ENCODE measurements at regions of chr12 and their contacts with region 1.

Region 1: DNA sequence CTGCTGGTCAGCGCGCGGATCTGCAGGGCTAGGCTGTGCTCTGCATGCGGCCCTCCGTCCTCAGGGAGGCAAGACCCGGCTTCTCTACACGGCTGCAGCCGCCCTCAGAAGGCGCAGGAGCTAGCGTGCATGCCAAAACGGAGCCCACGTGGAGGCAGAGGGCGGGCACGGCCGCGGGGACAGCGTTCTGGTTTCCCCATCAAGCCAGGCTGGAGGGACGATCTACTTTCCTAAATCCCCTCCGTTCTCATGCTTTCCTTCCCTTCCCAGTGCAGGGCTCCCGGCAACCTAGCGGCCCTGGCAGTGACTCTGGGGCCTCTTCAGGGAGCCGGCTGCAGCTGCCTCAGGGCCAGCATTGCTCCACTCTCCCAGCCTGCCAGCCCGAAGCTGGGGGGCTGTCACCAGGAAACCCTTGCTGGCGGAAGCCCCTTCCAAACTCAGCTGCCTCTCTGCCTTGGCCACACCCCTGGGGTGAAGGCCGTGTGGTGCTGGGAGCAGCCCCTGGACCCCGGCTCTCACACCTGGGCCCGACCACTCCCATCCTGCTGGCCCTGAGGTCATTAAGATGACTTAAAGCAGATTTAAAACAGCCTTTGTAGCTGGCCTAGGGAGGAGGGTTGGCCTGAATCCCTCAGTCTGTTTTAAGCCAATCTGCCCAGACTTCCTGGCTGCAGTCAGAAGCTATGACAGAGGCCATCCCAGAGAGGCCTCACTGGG is 9.2 kb upstream of the GOLGA3 start:
- DNase-seq: no peak
- ATAC-seq: no peak
- H3K4me3 ChIP-seq: peak overlapping the region in 1 of 2 experiments; percentile 1
- H3K4me3 Mint-ChIP-seq: peak overlapping the region; percentile 82
- H3K27ac ChIP-seq: no peak overlapping the region
- H3K27ac Mint-ChIP-seq: peak overlapping the region; percentile 93
- H3K4me1 ChIP-seq: peaks cover 42% of the 10 kb centered on the region
- H3K4me1 Mint-ChIP-seq: peaks cover 45% of the 10 kb centered on the region
- H3K27me3 ChIP-seq: no peaks in the 10 kb centered on the region
- H3K27me3 Mint-ChIP-seq: no peaks in the 10 kb centered on the region
- CTCF ChIP-seq: no peak

Region 2: DNA sequence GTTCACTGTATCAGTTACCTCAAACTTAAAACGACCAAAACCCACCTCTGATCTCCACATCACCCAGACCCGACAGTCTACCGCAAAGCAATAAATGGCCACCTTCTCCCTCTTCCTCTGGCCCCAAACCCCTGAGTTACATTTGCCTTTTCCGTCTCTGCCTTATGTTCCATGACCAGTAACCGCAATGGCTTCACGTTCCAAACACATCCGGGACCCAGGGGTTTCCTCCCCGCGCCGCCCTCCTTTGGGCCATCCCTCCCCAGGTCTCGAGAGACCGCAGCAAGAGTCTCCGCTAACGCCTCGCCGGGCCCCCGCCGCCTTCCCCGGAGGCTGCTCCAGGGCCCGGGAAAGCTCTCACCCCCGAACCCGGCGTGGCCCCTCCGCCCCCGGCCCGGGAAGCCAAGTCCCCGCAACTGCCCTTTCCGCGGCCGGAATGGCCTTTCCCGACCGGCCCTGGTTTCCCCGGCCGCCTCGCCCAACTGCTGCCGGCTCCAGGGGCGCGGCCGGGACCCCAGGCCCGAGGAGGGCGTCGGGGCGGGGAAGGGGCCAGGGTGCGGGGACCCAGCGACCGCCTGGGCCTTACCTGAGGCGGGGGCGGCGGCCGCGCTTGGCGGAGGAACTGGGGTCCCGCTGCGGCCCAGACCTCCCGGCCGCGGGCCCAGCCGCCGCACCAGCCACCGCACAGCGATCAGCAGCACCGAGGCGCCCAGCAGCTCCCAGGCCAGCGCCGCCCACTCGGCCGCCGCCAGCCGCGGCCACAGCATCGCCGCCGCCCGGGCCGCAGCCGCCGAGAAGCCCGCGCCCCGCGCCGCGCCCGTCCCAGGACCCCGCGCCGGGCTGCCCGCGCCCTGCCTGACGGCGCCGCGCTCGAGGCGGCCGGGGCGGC is 76.6 kb before region 1 on chr12 and contains the start of gene ANKLE2:
- CTCF ChIA-PET with region 1: no interaction called
- POLR2A ChIA-PET with region 1: no interaction called
- intact Hi-C with region 1: no loop called
- DNase-seq: peak in 8 of 9 experiments; percentile 45 to 78 (median 66)
- ATAC-seq: peak; percentile 57
- H3K4me3 ChIP-seq: peak within 1 kb of the TSS; percentile 66 to 82
- H3K4me3 Mint-ChIP-seq: peak within 1 kb of the TSS; percentile 94
- H3K27ac ChIP-seq: peak within 1 kb of the TSS; percentile 71 to 75
- H3K27ac Mint-ChIP-seq: peak within 1 kb of the TSS; percentile 98
- H3K4me1 ChIP-seq: peaks cover 18% of the 10 kb centered on the region
- H3K4me1 Mint-ChIP-seq: peaks cover 35% of the 10 kb centered on the region
- H3K27me3 ChIP-seq: no peaks in the 10 kb centered on the region
- H3K27me3 Mint-ChIP-seq: no peaks in the 10 kb centered on the region
- CTCF ChIP-seq: no peak
- total RNA-seq, gene ANKLE2: 54.7 to 57.9 TPM

Region 3: GRCh38 chr12:132872975-132873421 is 35.1 kb after region 1 on chr12:
- CTCF ChIA-PET with region 1: no interaction called
- POLR2A ChIA-PET with region 1: interaction called, 11 read pairs
- intact Hi-C with region 1: loop called (anchors 5 kb)
- DNase-seq: peak in 7 of 9 experiments; percentile 24 to 70 (median 40)
- ATAC-seq: peak; percentile 66
- H3K4me3 ChIP-seq: peak overlapping the region in 1 of 2 experiments; percentile 15
- H3K4me3 Mint-ChIP-seq: peak overlapping the region; percentile 75
- H3K27ac ChIP-seq: peak overlapping the region; percentile 36 to 43
- H3K27ac Mint-ChIP-seq: peak overlapping the region; percentile 94
- H3K4me1 ChIP-seq: peaks cover 21% of the 10 kb centered on the region
- H3K4me1 Mint-ChIP-seq: peaks cover 25% of the 10 kb centered on the region
- H3K27me3 ChIP-seq: no peaks in the 10 kb centered on the region
- H3K27me3 Mint-ChIP-seq: no peaks in the 10 kb centered on the region
- CTCF ChIP-seq: no peak

Measured in CD8-positive, alpha-beta T cell (primary cell).